HepG2 (cell line): ENCODE measurements at regions of chr18 and their contacts with region 1.

Region 1: DNA sequence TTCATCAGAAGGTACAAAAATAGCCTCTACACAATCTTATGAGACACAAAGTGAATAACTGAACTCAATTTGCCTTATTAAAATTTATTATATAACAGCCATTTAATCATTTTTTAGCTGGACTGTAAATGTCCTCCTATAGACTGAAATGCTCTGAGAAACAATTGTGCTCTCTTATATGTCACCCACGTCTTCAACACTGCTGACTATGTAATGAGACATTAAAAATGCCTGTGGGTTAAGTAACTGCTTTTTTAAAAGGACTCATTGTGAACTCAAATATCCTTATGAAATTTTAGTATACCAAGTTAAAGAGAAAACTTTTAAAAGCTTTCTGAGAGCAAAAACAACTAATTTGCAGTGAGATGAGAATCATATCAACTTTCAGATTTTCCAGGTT is 10.4 kb upstream of the GALNT1 start:
- DNase-seq: no peak
- ATAC-seq: no peak
- H3K4me3 ChIP-seq: no peak overlapping the region
- H3K27ac ChIP-seq: no peak overlapping the region
- H3K4me1 ChIP-seq: no peaks in the 10 kb centered on the region
- H3K27me3 ChIP-seq: peaks cover 0 to 4% of the 10 kb centered on the region in 2 experiments; a peak in 2 of 5 replicates
- CTCF ChIP-seq: no peak
- EP300 ChIP-seq: no peak
- POLR2A ChIP-seq: no peak
- RAD21 ChIP-seq: no peak

Region 2: DNA sequence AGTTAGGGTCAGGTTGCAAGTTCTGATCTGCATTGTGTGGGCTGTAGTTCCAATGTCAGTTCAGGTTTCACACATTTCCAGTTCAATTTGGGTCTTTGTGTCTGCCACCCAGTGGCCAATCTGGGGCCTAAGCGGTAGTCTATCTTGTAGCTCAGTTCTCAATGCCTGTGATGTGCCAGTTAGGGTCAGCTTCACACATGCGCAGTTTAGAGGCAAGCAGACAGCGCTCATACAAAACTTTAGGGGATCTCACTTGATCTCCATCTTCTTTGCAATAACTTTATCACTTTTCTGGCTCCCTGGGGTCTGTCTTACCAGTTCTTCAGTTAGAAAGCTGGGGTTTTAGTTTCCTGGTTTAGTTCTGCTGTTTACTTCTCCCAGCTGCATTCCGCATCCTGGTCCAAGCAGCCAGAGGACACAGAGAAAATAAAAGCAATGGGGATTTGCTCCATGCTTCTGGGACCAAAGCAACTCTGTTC is 216.0 kb before region 1 on chr18:
- CTCF ChIA-PET with region 1: no interaction called
- POLR2A ChIA-PET with region 1: no interaction called
- in situ Hi-C with region 1: no loop called
- intact Hi-C with region 1: no loop called
- DNase-seq: peak; percentile 85
- ATAC-seq: peak; percentile 100
- H3K4me3 ChIP-seq: peak overlapping the region in 2 of 3 experiments; percentile 25 to 38; a peak in 2 of 6 replicates
- H3K27ac ChIP-seq: no peak overlapping the region
- H3K4me1 ChIP-seq: no peaks in the 10 kb centered on the region
- H3K27me3 ChIP-seq: no peaks in the 10 kb centered on the region
- CTCF ChIP-seq: peak; percentile 92
- EP300 ChIP-seq: no peak
- POLR2A ChIP-seq: no peak
- RAD21 ChIP-seq: peak; percentile 74

Region 3: GRCh38 chr18:35484034-35484433 is 87.1 kb before region 1 on chr18:
- CTCF ChIA-PET with region 1: no interaction called
- POLR2A ChIA-PET with region 1: no interaction called
- in situ Hi-C with region 1: no loop called
- intact Hi-C with region 1: no loop called
- DNase-seq: no peak
- ATAC-seq: no peak
- H3K4me3 ChIP-seq: no peak overlapping the region
- H3K27ac ChIP-seq: no peak overlapping the region
- H3K4me1 ChIP-seq: peaks cover 91% of the 10 kb centered on the region
- H3K27me3 ChIP-seq: no peaks in the 10 kb centered on the region; a peak in 1 of 5 replicates
- CTCF ChIP-seq: no peak
- EP300 ChIP-seq: no peak
- POLR2A ChIP-seq: no peak
- RAD21 ChIP-seq: no peak

Region 4: GRCh38 chr18:35519148-35519899 is 51.8 kb before region 1 on chr18:
- CTCF ChIA-PET with region 1: no interaction called
- POLR2A ChIA-PET with region 1: no interaction called
- in situ Hi-C with region 1: no loop called
- intact Hi-C with region 1: loop called (anchors 2 kb)
- DNase-seq: peak; percentile 34
- ATAC-seq: peak; percentile 51
- H3K4me3 ChIP-seq: no peak overlapping the region
- H3K27ac ChIP-seq: no peak overlapping the region
- H3K4me1 ChIP-seq: peaks cover 42% of the 10 kb centered on the region
- H3K27me3 ChIP-seq: no peaks in the 10 kb centered on the region
- CTCF ChIP-seq: no peak
- EP300 ChIP-seq: no peak
- POLR2A ChIP-seq: no peak
- RAD21 ChIP-seq: no peak